ENCODE measurements at regions of chr4 and their contacts with region 1.

Region 1: DNA sequence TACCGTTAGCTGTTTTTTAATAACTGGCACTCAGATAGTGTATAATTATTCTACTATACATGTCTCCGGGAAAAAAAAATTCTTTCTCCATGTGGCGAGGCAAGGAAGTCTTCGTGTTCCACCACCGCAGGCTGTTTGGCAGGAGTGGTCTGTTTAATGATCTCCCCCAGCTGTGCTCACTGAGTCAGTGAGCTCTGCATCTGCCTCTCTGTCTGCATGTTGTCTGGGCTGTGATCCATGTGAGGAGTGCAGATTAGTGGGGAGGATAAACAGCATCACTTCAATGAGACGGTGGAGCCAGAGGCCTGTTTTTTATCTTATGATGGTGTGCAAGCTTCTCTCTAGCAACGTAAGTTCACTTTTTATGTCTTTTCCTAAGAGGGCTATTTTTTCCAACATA is 69.8 kb downstream of the RPS3A start:
- DNase-seq: peak; percentile 80 to 90 (median 82)
- H3K4me3 ChIP-seq: no peak overlapping the region
- H3K27ac ChIP-seq: peak overlapping the region in 1 of 2 donors; percentile 60
- H3K4me1 ChIP-seq: peaks cover 23% of the 10 kb centered on the region
- H3K27me3 ChIP-seq: no peaks in the 10 kb centered on the region
- CTCF ChIP-seq: peak in 1 of 3 donors; percentile 13
- EP300 ChIP-seq: no peak
- POLR2A ChIP-seq: peak; percentile 9

Region 2: DNA sequence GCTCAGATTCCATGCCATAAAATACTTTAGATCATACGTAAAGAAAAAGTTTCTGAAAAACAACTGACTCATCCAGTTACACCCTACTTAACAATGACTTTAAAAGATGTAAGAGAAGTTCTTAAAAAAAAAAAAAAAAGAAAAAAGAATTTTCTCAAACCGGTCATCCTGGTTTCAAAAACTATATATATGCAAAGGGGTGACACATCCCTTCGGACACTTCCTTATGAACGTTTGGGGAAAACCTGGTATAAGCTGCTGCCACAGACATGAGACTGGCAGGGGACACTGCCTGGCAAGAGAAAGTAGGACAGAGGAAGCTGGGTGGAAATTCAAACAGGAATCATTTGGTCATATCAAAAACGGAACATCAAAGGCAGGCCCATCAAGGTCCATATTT is 26.6 kb after region 1 on chr4:
- intact Hi-C with region 1: no loop called
- DNase-seq: no peak
- H3K4me3 ChIP-seq: no peak overlapping the region
- H3K27ac ChIP-seq: no peak overlapping the region
- H3K4me1 ChIP-seq: peaks cover 10% of the 10 kb centered on the region
- H3K27me3 ChIP-seq: no peaks in the 10 kb centered on the region
- CTCF ChIP-seq: no peak
- EP300 ChIP-seq: no peak
- POLR2A ChIP-seq: no peak

Region 3: DNA sequence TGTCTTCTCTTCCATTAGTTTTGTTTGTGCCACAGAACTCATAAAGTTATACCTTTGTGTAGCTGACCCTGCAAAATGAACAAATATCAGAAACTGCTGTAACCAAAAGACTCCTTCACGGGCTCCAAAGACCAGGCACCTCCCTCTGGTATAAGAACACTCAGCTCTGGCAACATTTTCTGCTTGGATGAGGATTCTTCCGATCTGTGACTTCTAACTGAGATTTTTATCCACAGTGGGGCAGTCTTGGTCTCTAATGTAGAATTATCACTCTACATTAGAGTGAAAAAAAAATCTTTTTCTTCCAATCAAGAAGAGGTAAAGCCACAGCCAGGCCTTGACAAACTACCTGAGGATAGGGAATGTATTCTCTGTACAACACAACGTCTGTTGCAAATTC is 69.3 kb after region 1 on chr4:
- intact Hi-C with region 1: loop called in 1 of 4 experiments (anchors 10 kb)
- DNase-seq: no peak
- H3K4me3 ChIP-seq: no peak overlapping the region
- H3K27ac ChIP-seq: no peak overlapping the region
- H3K4me1 ChIP-seq: peaks cover 5% of the 10 kb centered on the region
- H3K27me3 ChIP-seq: no peaks in the 10 kb centered on the region
- CTCF ChIP-seq: no peak
- EP300 ChIP-seq: no peak
- POLR2A ChIP-seq: no peak

Region 4: DNA sequence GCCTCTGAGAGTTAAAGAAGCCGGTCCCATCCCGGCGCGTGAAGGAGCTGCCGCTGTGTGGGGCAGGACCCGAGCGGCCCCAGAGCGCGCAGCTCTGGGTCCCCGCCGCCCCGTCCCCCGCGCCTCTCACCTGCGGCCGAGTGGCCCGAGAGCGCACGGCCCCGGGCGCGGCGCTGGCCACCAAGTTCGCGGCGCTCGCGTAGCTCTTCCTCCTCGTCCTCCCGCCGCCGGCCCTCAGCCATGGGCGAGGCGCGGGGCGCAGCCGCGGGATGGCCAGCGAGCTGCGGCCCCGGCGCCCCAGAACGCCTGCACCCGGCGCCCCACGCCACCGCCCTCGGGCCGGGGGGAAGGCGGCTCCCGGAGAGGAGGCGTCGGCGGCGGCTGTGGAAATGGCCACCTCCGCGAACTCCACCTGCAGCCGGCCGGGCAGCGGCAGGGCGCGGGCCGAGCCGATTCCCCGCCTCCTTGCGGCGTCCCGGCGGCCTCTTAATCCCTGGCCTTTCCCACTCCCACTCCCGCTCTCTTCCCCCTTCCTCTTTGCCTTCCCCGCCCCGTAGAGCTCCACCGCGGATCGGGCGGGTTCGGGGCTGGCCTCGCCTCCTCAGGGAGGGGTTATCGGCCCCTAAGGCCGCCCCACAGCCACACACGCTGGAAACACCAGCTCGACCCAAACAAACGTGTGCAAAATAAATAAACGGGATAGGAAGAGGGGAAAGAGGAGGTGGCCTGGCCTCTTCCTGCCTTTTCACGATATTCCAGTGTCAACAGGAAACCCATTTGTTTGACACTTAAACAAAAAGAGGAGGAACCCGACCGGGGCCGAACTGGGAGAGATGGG is 156.1 kb after region 1 on chr4 and contains the start of gene SH3D19:
- intact Hi-C with region 1: loop called in 1 of 4 experiments (anchors 10 kb)
- DNase-seq: peak; percentile 68 to 81 (median 74)
- H3K4me3 ChIP-seq: peak within 1 kb of the TSS; percentile 80
- H3K27ac ChIP-seq: peak within 1 kb of the TSS; percentile 84 to 93
- H3K4me1 ChIP-seq: peaks cover 11% of the 10 kb centered on the region
- H3K27me3 ChIP-seq: no peaks in the 10 kb centered on the region
- CTCF ChIP-seq: no peak
- EP300 ChIP-seq: no peak
- POLR2A ChIP-seq: peak; percentile 48
- total RNA-seq, gene SH3D19: 44.0 to 117 (median 91.4) TPM

Measured in ovary (tissue), 10 donors.